Caco-2 (cell line): ENCODE measurements at regions of chr10 and their contacts with region 1.

Region 1: GRCh38 chr10:21399392-21400035 is 126.0 kb downstream of the SKIDA1 start:
- DNase-seq: peak; percentile 89 to 91
- H3K4me3 ChIP-seq: no peak overlapping the region
- H3K4me3 Mint-ChIP-seq: peak overlapping the region; percentile 58
- H3K27ac Mint-ChIP-seq: peak overlapping the region; percentile 93
- H3K4me1 ChIP-seq: peaks cover 54% of the 10 kb centered on the region
- H3K4me1 Mint-ChIP-seq: peaks cover 35% of the 10 kb centered on the region
- H3K27me3 ChIP-seq: no peaks in the 10 kb centered on the region
- H3K27me3 Mint-ChIP-seq: no peaks in the 10 kb centered on the region
- CTCF ChIP-seq: no peak

Region 2: GRCh38 chr10:21292763-21293517 is 106.6 kb before region 1 on chr10:
- CTCF ChIA-PET with region 1: no interaction called
- POLR2A ChIA-PET with region 1: interaction called, 5 read pairs
- intact Hi-C with region 1: loop called (anchors 1 kb)
- DNase-seq: peak; percentile 85
- H3K4me3 ChIP-seq: peak overlapping the region; percentile 29
- H3K4me3 Mint-ChIP-seq: peak overlapping the region; percentile 73
- H3K27ac Mint-ChIP-seq: peak overlapping the region; percentile 65
- H3K4me1 ChIP-seq: peaks cover 48% of the 10 kb centered on the region
- H3K4me1 Mint-ChIP-seq: peaks cover 40% of the 10 kb centered on the region
- H3K27me3 ChIP-seq: no peaks in the 10 kb centered on the region
- H3K27me3 Mint-ChIP-seq: no peaks in the 10 kb centered on the region
- CTCF ChIP-seq: no peak

Region 3: DNA sequence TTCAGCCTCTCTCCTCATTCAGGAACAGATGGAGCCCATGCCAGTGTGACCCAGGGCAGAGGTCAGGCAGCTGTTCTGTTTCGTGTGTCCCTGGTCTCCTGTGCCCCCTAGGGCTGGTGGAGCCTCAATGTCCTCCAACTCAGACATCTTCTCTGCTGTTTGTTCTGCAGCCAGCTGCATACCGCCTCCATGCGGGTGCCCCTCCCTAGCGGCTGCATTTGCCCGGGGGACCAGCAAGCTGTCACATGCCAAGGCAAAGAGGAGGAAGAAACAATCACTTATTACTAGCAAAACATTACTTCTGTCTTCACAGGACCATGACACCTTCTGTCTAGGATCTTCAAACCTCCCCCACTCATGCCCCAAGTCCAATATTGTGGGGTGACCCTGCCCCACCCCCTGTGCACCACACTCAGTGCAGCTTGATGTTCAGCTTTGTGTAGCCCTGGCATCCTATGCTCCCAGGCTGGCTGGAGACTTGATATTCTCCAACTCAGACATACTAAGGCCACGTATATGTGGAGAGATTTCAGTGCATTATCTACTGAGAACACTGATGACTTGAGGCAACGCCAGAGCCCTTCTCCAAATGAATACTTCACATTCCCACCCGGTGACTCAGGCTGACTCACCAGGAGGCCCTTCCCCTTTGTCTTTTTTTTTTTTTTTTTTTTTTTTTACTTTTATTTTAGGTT is 62.9 kb before region 1 on chr10:
- CTCF ChIA-PET with region 1: no interaction called
- POLR2A ChIA-PET with region 1: no interaction called
- intact Hi-C with region 1: loop called (anchors 2 kb)
- DNase-seq: peak; percentile 90 to 94
- H3K4me3 ChIP-seq: no peak overlapping the region
- H3K4me3 Mint-ChIP-seq: peak overlapping the region; percentile 30
- H3K27ac Mint-ChIP-seq: peak overlapping the region; percentile 91
- H3K4me1 ChIP-seq: peaks cover 47% of the 10 kb centered on the region
- H3K4me1 Mint-ChIP-seq: peaks cover 31% of the 10 kb centered on the region
- H3K27me3 ChIP-seq: no peaks in the 10 kb centered on the region
- H3K27me3 Mint-ChIP-seq: no peaks in the 10 kb centered on the region
- CTCF ChIP-seq: peak; percentile 11 to 19

Region 4: DNA sequence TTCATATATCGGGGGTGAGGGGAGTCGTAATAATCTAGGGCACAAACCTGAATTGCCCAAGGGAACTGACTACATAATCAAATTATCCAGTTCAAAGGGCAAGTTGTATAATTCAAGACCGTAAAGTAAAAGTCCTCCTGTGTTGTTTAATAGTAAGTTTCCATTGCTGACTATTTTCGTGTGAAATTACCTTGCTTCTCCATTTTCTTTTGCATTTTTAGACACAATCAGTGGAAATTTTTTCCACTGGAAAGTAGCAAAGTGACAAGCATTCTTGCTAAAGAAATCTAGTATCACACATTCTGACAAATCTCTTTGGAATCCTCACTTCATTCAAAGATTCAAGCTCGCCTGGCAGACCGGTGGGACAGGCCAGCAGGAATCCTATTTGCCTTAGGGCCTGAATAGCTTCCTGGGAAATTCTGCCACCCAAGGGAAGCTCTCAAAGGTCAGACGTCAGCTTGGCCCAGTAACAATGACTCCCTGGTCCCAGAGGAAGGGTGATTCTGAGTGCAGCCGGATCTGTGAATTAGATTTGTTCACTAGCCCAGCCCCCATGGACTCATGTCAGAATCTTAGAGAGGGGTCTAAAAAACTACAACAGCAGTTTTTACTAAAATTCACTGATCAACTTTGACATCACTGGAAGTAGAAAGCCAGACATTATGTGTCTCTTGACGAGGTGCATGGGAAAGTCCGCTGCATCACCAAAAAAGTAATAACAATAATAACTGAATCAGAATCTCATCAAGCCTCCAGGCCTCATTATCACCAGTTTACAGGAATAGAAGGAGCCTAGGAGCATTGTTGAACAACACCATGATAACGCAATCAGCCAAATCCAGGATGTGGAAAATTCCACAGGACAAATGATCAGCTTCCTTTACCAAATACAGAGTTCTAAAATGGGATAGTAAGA is 35.1 kb before region 1 on chr10:
- CTCF ChIA-PET with region 1: no interaction called
- POLR2A ChIA-PET with region 1: interaction called, 8 read pairs
- intact Hi-C with region 1: loop called (anchors 1 kb)
- DNase-seq: peak; percentile 94 to 95
- H3K4me3 ChIP-seq: no peak overlapping the region
- H3K4me3 Mint-ChIP-seq: peak overlapping the region; percentile 68
- H3K27ac Mint-ChIP-seq: peak overlapping the region; percentile 93
- H3K4me1 ChIP-seq: peaks cover 76% of the 10 kb centered on the region
- H3K4me1 Mint-ChIP-seq: peaks cover 49% of the 10 kb centered on the region
- H3K27me3 ChIP-seq: no peaks in the 10 kb centered on the region
- H3K27me3 Mint-ChIP-seq: no peaks in the 10 kb centered on the region
- CTCF ChIP-seq: no peak

Region 5: GRCh38 chr10:21432271-21432670 is 32.8 kb after region 1 on chr10:
- CTCF ChIA-PET with region 1: no interaction called
- POLR2A ChIA-PET with region 1: interaction called, 3 read pairs
- intact Hi-C with region 1: loop called (anchors 1 kb)
- DNase-seq: peak; percentile 58 to 69
- H3K4me3 ChIP-seq: no peak overlapping the region
- H3K4me3 Mint-ChIP-seq: peak overlapping the region; percentile 8
- H3K27ac Mint-ChIP-seq: peak overlapping the region; percentile 65
- H3K4me1 ChIP-seq: peaks cover 54% of the 10 kb centered on the region
- H3K4me1 Mint-ChIP-seq: peaks cover 47% of the 10 kb centered on the region
- H3K27me3 ChIP-seq: no peaks in the 10 kb centered on the region
- H3K27me3 Mint-ChIP-seq: no peaks in the 10 kb centered on the region
- CTCF ChIP-seq: no peak